ENCODE measurements at regions of chr17 and their contacts with region 1.

Region 1: DNA sequence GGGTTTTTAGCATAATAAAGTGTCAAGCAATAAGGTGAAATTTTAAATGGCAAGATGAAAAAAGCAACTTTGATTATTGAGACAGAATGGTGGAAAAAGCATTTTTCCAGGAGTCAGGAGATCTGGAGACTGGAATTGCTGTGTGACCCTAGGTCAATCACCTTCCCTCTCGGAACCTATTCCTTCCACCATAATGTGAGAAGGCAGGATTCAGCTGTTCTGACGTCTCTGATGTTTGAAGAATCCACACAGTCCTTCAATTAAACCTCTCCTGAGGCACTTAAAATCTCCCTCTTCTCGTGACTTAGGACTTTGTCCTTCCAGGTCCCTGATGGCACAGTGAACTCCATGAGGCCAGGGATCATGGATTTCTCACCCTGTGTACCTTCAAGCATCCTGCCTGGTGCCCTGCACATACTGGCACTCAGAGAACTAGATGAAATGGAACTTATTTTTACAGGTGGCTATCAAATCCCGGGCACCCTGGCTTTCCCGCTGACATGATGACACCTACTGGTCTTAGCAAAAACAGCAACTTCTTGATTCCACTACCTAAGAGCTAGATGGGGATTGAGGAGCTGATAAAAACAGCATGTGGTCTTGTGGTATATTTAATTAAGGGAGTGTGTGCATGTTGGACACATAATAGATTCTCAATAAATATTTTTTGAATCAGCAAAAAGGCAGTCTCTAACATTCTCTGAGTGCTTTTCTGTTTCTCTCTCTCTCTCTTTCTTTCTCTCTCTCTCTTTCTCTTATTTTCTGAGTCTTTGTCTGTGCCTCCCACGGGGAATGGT is 2.3 kb upstream of the CCDC182 start:
- DNase-seq: no peak
- H3K4me3 ChIP-seq: no peak overlapping the region
- H3K27ac ChIP-seq: no peak overlapping the region
- H3K4me1 ChIP-seq: peaks cover 4% of the 10 kb centered on the region
- H3K27me3 ChIP-seq: peaks cover 39% of the 10 kb centered on the region
- CTCF ChIP-seq: peak; percentile 84

Region 2: DNA sequence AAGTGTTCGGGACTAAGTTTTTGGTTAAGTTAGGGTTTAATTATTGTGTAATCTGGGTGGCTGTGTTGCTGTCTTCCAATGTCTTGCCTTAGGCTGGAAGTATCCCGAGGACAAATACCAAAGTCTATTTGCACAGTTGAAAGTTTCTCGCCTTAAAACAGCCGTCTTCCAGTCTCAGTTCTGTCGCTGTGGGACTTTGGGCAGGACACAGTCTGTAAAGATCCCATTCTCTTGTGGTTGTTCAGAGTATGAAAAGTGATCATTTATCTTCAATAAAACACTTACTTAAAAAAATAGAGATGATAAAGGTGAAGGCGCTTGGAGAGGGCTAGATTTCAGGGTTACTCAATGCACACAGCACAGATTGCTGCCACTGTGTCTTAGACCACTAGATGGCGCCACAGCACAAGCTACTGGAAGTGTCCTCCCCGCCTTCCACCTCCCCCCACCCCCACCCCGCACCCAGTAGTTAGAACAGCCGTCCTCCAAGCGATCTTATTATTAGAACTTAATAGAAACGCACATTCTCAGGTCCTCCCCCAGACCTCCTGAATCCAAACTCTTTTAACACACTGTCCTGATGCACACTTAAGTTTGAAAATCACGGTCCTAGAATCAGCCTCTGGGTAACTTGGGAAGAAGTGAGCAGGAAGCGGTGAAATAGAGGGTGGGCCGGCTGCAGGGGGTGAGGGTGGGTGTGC is 616.5 kb before region 1 on chr17:
- intact Hi-C with region 1: loop called (anchors 10 kb)
- DNase-seq: peak; percentile 78
- H3K4me3 ChIP-seq: no peak overlapping the region
- H3K27ac ChIP-seq: no peak overlapping the region
- H3K4me1 ChIP-seq: no peaks in the 10 kb centered on the region
- H3K27me3 ChIP-seq: no peaks in the 10 kb centered on the region
- CTCF ChIP-seq: peak; percentile 95

Measured in left ventricle myocardium inferior (tissue), 1 donor.